Heart left ventricle (tissue), 16 donors: ENCODE measurements at regions of chr4 and their contacts with region 1.

Region 1: DNA sequence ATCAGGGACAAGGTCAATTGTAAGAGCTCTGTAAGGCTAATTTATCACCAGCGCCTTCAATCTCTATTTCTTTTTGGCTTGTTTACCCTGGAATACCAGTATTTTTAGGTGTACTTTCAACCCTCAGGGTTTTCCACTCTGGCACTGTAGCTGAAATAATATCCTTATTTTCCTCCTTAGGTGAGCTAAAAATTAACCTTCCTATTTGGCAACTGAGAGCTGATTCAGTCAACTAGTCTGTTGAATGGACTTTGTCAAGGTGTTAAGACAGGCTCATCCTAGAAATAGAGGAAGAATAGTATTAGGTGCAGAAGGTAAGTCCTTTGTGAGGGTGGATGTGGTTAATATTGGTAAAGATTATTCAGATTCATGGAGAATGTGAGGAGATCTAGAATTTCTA is 101.3 kb upstream of the BANK1 start:
- DNase-seq: no peak
- ATAC-seq: no peak
- H3K4me3 ChIP-seq: no peak overlapping the region
- H3K27ac ChIP-seq: no peak overlapping the region
- H3K4me1 ChIP-seq: peaks cover 0 to 3% (median 0%) of the 10 kb centered on the region in 12 donors
- H3K27me3 ChIP-seq: no peaks in the 10 kb centered on the region
- CTCF ChIP-seq: no peak
- POLR2A ChIP-seq: no peak

Region 2: DNA sequence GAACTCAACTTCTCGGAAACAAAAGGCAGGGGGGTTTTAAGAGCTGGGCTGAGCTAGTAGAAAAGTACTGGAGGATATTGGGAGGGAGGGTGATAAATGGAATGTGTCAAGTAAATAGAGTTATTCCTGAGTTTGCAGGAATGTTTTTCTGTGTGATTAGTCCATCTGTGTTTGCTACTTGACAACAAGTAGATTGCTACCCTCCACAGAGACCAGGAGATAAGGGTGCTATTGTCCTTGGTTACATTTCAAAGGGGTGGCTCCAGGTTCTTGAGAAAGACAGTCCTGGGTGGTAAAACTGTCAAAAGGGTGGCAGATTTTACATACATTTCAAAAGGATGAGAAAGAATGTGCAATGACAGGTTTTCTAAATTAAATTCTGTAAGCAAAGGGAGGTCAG is 160.7 kb before region 1 on chr4:
- intact Hi-C with region 1: no loop called
- DNase-seq: no peak
- ATAC-seq: no peak
- H3K4me3 ChIP-seq: no peak overlapping the region
- H3K27ac ChIP-seq: no peak overlapping the region
- H3K4me1 ChIP-seq: no peaks in the 10 kb centered on the region
- H3K27me3 ChIP-seq: no peaks in the 10 kb centered on the region
- CTCF ChIP-seq: no peak
- POLR2A ChIP-seq: no peak

Region 3: DNA sequence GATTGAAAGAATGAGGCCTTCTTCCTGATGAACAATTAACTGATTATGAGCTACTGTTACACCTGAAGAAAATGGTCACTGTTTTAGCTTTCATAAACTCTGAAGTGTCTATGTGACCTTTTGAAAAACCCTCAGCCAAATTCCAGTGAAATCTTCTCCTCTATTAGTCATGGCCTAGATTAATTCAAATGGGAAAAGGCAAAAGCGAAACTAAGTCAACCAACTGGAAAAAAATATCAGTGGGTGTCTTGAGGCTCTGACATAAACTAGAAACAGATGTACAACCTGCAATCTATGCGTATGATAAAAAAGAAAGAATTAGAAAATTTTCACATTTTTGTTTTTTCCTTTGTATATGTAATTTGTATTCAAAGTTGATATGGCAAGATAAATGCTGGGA is 68.1 kb before region 1 on chr4:
- intact Hi-C with region 1: loop called in 1 of 10 experiments (anchors 2 kb)
- DNase-seq: no peak
- ATAC-seq: no peak
- H3K4me3 ChIP-seq: no peak overlapping the region
- H3K27ac ChIP-seq: no peak overlapping the region
- H3K4me1 ChIP-seq: no peaks in the 10 kb centered on the region
- H3K27me3 ChIP-seq: no peaks in the 10 kb centered on the region
- CTCF ChIP-seq: no peak
- POLR2A ChIP-seq: no peak

Region 4: DNA sequence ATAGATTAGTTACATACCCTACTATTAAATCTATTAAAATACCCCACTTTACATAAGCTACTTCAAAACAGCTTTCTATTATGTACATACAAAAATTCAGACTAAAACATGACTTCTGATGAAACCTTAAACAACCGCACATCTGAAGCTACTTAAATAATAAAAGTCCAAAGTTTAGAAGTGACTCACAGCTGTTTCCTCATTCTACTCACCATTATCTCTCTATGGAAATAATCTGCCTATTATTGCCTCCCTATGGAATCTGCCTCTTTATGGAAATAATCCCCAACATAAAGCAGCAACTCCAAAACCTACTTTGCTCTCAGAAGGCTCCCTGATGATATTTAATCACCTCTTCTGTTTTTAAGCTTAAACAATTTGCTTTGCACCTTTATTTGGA is 85.6 kb after region 1 on chr4:
- intact Hi-C with region 1: no loop called
- DNase-seq: no peak
- ATAC-seq: no peak
- H3K4me3 ChIP-seq: no peak overlapping the region
- H3K27ac ChIP-seq: no peak overlapping the region
- H3K4me1 ChIP-seq: no peaks in the 10 kb centered on the region
- H3K27me3 ChIP-seq: no peaks in the 10 kb centered on the region
- CTCF ChIP-seq: no peak
- POLR2A ChIP-seq: no peak